Caco-2 (cell line): ENCODE measurements at regions of chr9 and their contacts with region 1.

Region 1: GRCh38 chr9:126914458-126915280 is at the start of gene RALGPS1:
- DNase-seq: peak; percentile 96 to 98
- H3K4me3 ChIP-seq: peak within 1 kb of the TSS; percentile 86
- H3K4me3 Mint-ChIP-seq: peak within 1 kb of the TSS; percentile 78
- H3K27ac Mint-ChIP-seq: peak within 1 kb of the TSS; percentile 71
- H3K4me1 ChIP-seq: peaks cover 28% of the 10 kb centered on the region
- H3K4me1 Mint-ChIP-seq: peaks cover 8% of the 10 kb centered on the region
- H3K27me3 ChIP-seq: no peaks in the 10 kb centered on the region
- H3K27me3 Mint-ChIP-seq: peaks cover 7% of the 10 kb centered on the region
- CTCF ChIP-seq: no peak
- total RNA-seq, gene RALGPS1: 41.5 and 43.9 TPM in 2 replicates

Region 2: GRCh38 chr9:126860077-126860756 is 54.5 kb before region 1 on chr9 and contains the start of gene ZBTB34:
- CTCF ChIA-PET with region 1: no interaction called
- POLR2A ChIA-PET with region 1: no interaction called
- intact Hi-C with region 1: loop called (anchors 2 kb)
- DNase-seq: peak; percentile 74 to 85
- H3K4me3 ChIP-seq: peak within 1 kb of the TSS; percentile 84
- H3K4me3 Mint-ChIP-seq: peak within 1 kb of the TSS; percentile 74
- H3K27ac Mint-ChIP-seq: peak within 1 kb of the TSS; percentile 75
- H3K4me1 ChIP-seq: no peaks in the 10 kb centered on the region; the same call in 1 of the 2 replicates
- H3K4me1 Mint-ChIP-seq: peaks cover 16% of the 10 kb centered on the region
- H3K27me3 ChIP-seq: no peaks in the 10 kb centered on the region
- H3K27me3 Mint-ChIP-seq: no peaks in the 10 kb centered on the region
- CTCF ChIP-seq: peak; percentile 97 to 99
- total RNA-seq, gene ZBTB34: 16.8 and 17.1 TPM in 2 replicates